ENCODE measurements at regions of chr10 and their contacts with region 1.

Region 1: GRCh38 chr10:96831867-96832720 is at the start of gene LCOR:
- DNase-seq: peak; percentile 48 to 84 (median 65)
- H3K4me3 ChIP-seq: peak within 1 kb of the TSS; percentile 60 to 97 (median 90)
- H3K27ac ChIP-seq: peak within 1 kb of the TSS; percentile 83 to 99 (median 96)
- H3K27me3 ChIP-seq: no peaks in the 10 kb centered on the region
- CTCF ChIP-seq: peak in 12 of 56 donors; percentile 2 to 29 (median 10)
- total RNA-seq, gene LCOR: 32.2 to 74.6 (median 48.4) TPM

Region 2: GRCh38 chr10:95716466-95717224 is 1115.4 kb before region 1 on chr10:
- intact Hi-C with region 1: no loop called
- DNase-seq: no peak
- H3K4me3 ChIP-seq: no peak overlapping the region
- H3K27ac ChIP-seq: no peak overlapping the region
- H3K27me3 ChIP-seq: no peaks in the 10 kb centered on the region
- CTCF ChIP-seq: no peak

Region 3: DNA sequence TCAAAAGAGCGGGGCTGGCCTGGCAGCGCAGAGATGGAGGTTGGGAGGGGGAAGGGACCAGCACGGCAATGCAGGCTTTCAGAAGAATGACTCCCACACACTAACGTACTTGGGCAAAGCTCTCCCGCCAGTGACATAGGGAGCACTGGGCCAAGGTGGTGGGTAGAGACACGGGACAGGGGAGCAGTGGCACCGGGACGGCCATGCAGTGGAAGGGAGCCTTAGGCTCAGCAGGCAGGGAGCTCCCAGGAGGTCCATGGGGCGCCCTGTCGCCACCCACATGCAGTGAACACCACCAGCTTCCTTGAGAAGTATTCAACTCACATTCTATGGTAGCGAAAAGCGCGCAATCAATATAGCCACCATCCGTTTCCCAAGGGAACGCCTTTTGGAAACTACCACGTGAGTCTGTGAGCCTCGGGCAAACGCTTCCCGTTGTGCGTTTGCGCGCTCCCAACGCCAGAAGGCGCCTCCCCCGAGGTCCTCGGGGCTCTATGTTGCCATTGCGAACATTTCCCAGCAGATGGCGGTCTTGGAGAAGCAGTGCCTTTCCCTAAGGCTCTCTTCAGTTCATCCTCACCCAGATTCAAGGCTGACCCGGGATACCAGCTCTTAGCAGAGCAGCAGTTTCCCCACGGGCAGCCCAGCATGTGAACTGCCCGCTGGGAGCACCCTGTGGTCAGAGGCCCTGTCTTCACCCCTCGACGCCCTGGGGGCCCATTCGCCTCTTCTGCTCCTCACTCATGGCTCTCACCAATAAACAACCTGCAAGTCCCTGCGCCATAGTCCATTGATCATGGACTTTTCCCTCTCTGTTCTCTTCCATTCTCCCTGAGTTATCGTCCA is 456.9 kb before region 1 on chr10:
- intact Hi-C with region 1: loop called (anchors 2 to 5 kb)
- DNase-seq: peak; percentile 84 to 94 (median 90)
- H3K4me3 ChIP-seq: peak overlapping the region; percentile 44 to 79 (median 67)
- H3K27ac ChIP-seq: peak overlapping the region in 58 of 59 donors; percentile 51 to 90 (median 77)
- H3K27me3 ChIP-seq: no peaks in the 10 kb centered on the region
- CTCF ChIP-seq: peak; percentile 78 to 100 (median 98)

Region 4: GRCh38 chr10:96765406-96766240 is 66.5 kb before region 1 on chr10:
- intact Hi-C with region 1: loop called in 1 of 2 experiments (anchors 2 kb)
- DNase-seq: peak in 8 of 10 donors; percentile 52 to 72 (median 64)
- H3K4me3 ChIP-seq: no peak overlapping the region
- H3K27ac ChIP-seq: peak overlapping the region in 2 of 59 donors; percentile 19 to 48
- H3K27me3 ChIP-seq: no peaks in the 10 kb centered on the region
- CTCF ChIP-seq: peak; percentile 46 to 83 (median 72)

Region 5: GRCh38 chr10:96902731-96903358 is 70.8 kb after region 1 on chr10:
- intact Hi-C with region 1: loop called in 1 of 2 experiments (anchors 10 kb)
- DNase-seq: no peak
- H3K4me3 ChIP-seq: no peak overlapping the region
- H3K27ac ChIP-seq: no peak overlapping the region
- H3K27me3 ChIP-seq: no peaks in the 10 kb centered on the region
- CTCF ChIP-seq: no peak

Region 6: GRCh38 chr10:96984541-96985131 is 152.5 kb after region 1 on chr10:
- intact Hi-C with region 1: loop called in 1 of 2 experiments (anchors 10 kb)
- DNase-seq: no peak
- H3K4me3 ChIP-seq: peak overlapping the region in 55 of 59 donors; percentile 1 to 64 (median 36)
- H3K27ac ChIP-seq: peak overlapping the region in 52 of 59 donors; percentile 4 to 81 (median 62)
- H3K27me3 ChIP-seq: no peaks in the 10 kb centered on the region
- CTCF ChIP-seq: no peak

Region 7: GRCh38 chr10:98608411-98608810 is 1776.3 kb after region 1 on chr10:
- intact Hi-C with region 1: no loop called
- DNase-seq: peak in 1 of 10 donors; percentile 9
- H3K4me3 ChIP-seq: peak overlapping the region in 26 of 59 donors; percentile 1 to 37 (median 12)
- H3K27ac ChIP-seq: no peak overlapping the region
- H3K27me3 ChIP-seq: peaks cover 0 to 4% (median 0%) of the 10 kb centered on the region in 45 donors
- CTCF ChIP-seq: no peak